ENCODE measurements at regions of chr9 and their contacts with region 1.

Region 1: DNA sequence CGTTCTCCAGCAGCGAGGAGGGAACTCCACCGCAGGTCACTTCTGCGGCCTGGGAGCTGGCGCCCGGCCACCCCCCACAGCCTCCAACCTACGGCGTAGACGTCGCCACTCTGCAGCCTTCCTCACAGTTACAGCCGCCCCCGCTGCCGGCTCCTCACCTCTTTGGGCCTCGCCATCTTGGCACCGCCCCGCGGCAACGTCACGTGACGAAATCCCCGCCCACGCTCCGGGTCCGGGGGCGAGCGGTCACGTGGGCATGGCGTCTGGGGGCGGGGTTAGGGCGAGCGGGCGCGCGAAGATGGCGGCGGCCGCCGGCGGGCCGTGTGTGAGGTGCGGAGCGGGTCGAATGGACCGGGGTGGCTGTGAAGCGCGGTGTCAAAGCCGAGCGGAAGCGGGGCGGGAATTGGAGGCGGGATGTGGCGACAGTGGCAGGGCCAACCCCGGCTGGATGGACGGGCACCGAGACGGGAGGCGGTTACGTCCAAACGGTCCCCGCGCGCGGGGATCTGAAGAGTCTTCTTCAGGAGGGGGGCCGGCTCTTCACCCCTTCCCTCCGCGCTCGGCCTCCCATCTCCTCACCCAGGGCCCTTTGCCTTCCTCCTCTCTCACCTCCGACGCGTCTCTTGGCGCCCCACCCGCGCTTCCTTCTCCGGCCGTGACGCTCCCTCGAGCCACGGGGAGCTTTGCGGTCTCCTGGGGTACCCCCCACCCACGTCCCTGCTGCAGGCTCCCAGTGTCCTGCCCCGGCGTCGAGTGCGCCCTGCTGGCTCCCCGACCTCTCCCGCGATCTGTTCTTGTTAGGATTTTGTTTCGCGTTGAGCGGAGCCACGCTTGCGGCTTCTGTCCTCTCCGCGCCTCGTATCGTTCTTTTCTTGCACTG is at the starts of genes DOLK and NUP188:
- DNase-seq: peak; percentile 97 to 100 (median 99)
- ATAC-seq: peak; percentile 87
- H3K4me3 ChIP-seq: peak within 1 kb of the TSS; percentile 93 to 99
- H3K4me3 Mint-ChIP-seq: peak within 1 kb of the TSS; percentile 99
- H3K27ac ChIP-seq: peak within 1 kb of the TSS; percentile 85 to 99
- H3K27ac Mint-ChIP-seq: peak within 1 kb of the TSS; percentile 97
- H3K4me1 ChIP-seq: peaks cover 20% of the 10 kb centered on the region
- H3K4me1 Mint-ChIP-seq: peaks cover 31% of the 10 kb centered on the region
- H3K27me3 ChIP-seq: no peaks in the 10 kb centered on the region
- H3K27me3 Mint-ChIP-seq: no peaks in the 10 kb centered on the region
- CTCF ChIP-seq: no peak
- total RNA-seq, gene DOLK: 10.4 to 10.7 TPM
- total RNA-seq, gene NUP188: 48.7 to 49.0 TPM

Region 2: DNA sequence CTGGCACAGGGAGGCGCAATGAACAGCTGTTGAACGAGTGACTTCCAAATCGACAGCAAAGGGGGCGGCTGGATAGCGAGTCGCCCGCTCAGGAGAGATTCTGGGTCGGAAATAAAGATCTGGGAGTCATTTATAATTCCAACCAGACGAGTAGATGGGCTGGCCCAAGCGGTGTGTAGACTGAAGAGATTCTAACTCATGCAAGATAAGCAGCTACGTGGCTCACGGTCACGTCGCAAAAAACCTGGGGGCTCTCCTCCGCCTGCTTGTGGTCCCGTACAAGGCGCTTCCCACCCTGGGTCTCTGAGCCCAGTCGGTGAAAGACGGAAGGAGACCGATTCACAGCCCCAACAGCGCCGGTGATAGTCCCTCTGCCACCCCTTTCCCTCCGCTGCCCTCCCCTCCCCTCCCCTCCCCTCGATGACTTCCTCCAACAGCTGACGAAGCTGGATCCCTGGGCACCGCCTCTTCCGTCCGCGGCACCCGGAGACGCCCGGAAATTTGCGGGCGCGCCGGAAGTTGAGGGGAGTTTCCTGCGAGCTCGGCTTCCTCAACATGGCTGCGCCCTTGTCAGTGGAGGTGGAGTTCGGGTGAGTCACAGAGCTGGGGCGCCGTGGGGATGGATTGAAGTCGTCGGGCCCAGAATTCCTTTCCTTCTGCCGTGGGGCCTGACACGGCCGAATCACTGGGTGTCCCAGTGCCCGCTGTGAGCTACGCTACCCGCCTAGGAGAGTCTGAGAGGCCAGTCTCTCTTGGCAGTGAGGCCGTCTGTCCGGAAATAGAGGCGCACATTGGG is 576.6 kb before region 1 on chr9 and contains the start of gene URM1:
- CTCF ChIA-PET with region 1: no interaction called
- POLR2A ChIA-PET with region 1: no interaction called
- intact Hi-C with region 1: loop called in 1 of 2 experiments (anchors 1 kb)
- DNase-seq: peak; percentile 91 to 98 (median 96)
- ATAC-seq: peak; percentile 90
- H3K4me3 ChIP-seq: peak within 1 kb of the TSS; percentile 84 to 95
- H3K4me3 Mint-ChIP-seq: peak within 1 kb of the TSS; percentile 97
- H3K27ac ChIP-seq: peak within 1 kb of the TSS; percentile 76 to 96
- H3K27ac Mint-ChIP-seq: peak within 1 kb of the TSS; percentile 98
- H3K4me1 ChIP-seq: peaks cover 16% of the 10 kb centered on the region
- H3K4me1 Mint-ChIP-seq: peaks cover 43% of the 10 kb centered on the region
- H3K27me3 ChIP-seq: no peaks in the 10 kb centered on the region
- H3K27me3 Mint-ChIP-seq: no peaks in the 10 kb centered on the region
- CTCF ChIP-seq: no peak
- total RNA-seq, gene URM1: 30.4 to 31.5 TPM

Region 3: GRCh38 chr9:128552153-128552743 is 395.4 kb before region 1 on chr9 and contains the start of gene SPTAN1:
- CTCF ChIA-PET with region 1: no interaction called
- POLR2A ChIA-PET with region 1: no interaction called
- intact Hi-C with region 1: loop called in 1 of 2 experiments (anchors 2 kb)
- DNase-seq: peak; percentile 91 to 97 (median 95)
- ATAC-seq: peak; percentile 85
- H3K4me3 ChIP-seq: peak within 1 kb of the TSS; percentile 85 to 95
- H3K4me3 Mint-ChIP-seq: no peak within 1 kb of the TSS
- H3K27ac ChIP-seq: peak within 1 kb of the TSS; percentile 92 to 93
- H3K27ac Mint-ChIP-seq: peak within 1 kb of the TSS; percentile 96
- H3K4me1 ChIP-seq: peaks cover 54% of the 10 kb centered on the region
- H3K4me1 Mint-ChIP-seq: peaks cover 24% of the 10 kb centered on the region
- H3K27me3 ChIP-seq: no peaks in the 10 kb centered on the region
- H3K27me3 Mint-ChIP-seq: no peaks in the 10 kb centered on the region
- CTCF ChIP-seq: no peak
- total RNA-seq, gene SPTAN1: 299 to 332 TPM

Region 4: GRCh38 chr9:128786681-128787601 is 160.7 kb before region 1 on chr9 and contains the start of gene TBC1D13:
- CTCF ChIA-PET with region 1: no interaction called
- POLR2A ChIA-PET with region 1: no interaction called
- intact Hi-C with region 1: loop called in 1 of 2 experiments (anchors 1 kb)
- DNase-seq: peak; percentile 86 to 95 (median 89)
- ATAC-seq: peak; percentile 90
- H3K4me3 ChIP-seq: peak within 1 kb of the TSS; percentile 96 to 98
- H3K4me3 Mint-ChIP-seq: peak within 1 kb of the TSS; percentile 94
- H3K27ac ChIP-seq: peak within 1 kb of the TSS; percentile 82 to 83
- H3K27ac Mint-ChIP-seq: peak within 1 kb of the TSS; percentile 96
- H3K4me1 ChIP-seq: peaks cover 20% of the 10 kb centered on the region
- H3K4me1 Mint-ChIP-seq: peaks cover 23% of the 10 kb centered on the region
- H3K27me3 ChIP-seq: no peaks in the 10 kb centered on the region
- H3K27me3 Mint-ChIP-seq: no peaks in the 10 kb centered on the region
- CTCF ChIP-seq: no peak
- total RNA-seq, gene TBC1D13: 30.7 to 35.0 TPM

Region 5: GRCh38 chr9:129028192-129028957 is 80.7 kb after region 1 on chr9 and contains the start of gene SH3GLB2:
- CTCF ChIA-PET with region 1: no interaction called
- POLR2A ChIA-PET with region 1: no interaction called
- intact Hi-C with region 1: loop called (anchors 1 to 5 kb)
- DNase-seq: peak; percentile 88 to 97 (median 94)
- ATAC-seq: peak; percentile 92
- H3K4me3 ChIP-seq: peak within 1 kb of the TSS; percentile 51 to 61
- H3K4me3 Mint-ChIP-seq: peak within 1 kb of the TSS; percentile 83
- H3K27ac ChIP-seq: peak within 1 kb of the TSS; percentile 40 to 62
- H3K27ac Mint-ChIP-seq: peak within 1 kb of the TSS; percentile 64
- H3K4me1 ChIP-seq: peaks cover 13% of the 10 kb centered on the region
- H3K4me1 Mint-ChIP-seq: peaks cover 24% of the 10 kb centered on the region
- H3K27me3 ChIP-seq: no peaks in the 10 kb centered on the region
- H3K27me3 Mint-ChIP-seq: no peaks in the 10 kb centered on the region
- CTCF ChIP-seq: no peak
- total RNA-seq, gene SH3GLB2: 64.9 to 68.3 TPM

Measured in CD8-positive, alpha-beta T cell (primary cell).